ENCODE measurements at regions of chr7 and their contacts with region 1.

Region 1: DNA sequence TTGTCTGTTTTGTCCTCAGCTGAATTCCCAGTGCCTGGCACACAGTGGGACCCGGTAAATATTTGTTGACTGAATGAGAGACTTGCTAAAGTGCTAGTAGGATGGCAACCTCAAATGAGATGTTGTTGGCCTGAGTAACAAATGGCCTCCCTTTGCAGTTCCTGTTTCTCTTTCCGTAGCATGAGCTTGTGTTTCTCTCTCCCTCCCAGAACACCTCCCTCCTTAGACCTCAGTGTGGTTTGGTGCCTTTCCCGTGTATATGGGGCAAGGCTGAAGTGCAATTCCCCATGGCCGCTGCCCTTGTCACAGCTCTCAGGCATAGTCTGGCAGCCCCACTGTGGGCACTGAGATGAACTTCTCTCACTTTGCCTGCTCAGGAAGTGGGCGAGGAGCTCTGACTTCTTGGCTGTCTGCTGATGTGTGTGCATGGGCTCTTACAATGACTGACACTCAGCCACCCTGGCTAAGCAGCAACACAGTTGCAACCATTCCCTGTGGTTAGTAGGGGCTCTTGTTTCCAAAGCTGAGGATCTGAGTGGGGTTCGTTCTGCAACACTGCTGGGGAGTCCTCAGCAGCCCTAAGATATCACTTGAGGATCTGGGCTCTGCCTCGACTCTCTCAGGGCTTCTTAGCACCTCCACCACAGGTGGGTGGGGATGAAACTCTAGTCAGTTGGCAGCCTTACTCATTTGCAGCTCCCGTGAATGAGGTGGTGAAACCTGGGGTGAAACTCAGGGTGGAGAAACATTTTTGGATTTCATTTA is 136.1 kb downstream of the ICA1 start:
- DNase-seq: peak; percentile 91
- H3K4me3 Mint-ChIP-seq: peak overlapping the region; percentile 76
- H3K27ac Mint-ChIP-seq: peak overlapping the region; percentile 98
- H3K4me1 Mint-ChIP-seq: peaks cover 67% of the 10 kb centered on the region
- H3K27me3 Mint-ChIP-seq: no peaks in the 10 kb centered on the region

Region 2: GRCh38 chr7:7653593-7654187 is 472.2 kb before region 1 on chr7:
- intact Hi-C with region 1: no loop called
- DNase-seq: peak; percentile 73
- H3K4me3 Mint-ChIP-seq: no peak overlapping the region
- H3K27ac Mint-ChIP-seq: no peak overlapping the region
- H3K4me1 Mint-ChIP-seq: peaks cover 11% of the 10 kb centered on the region
- H3K27me3 Mint-ChIP-seq: no peaks in the 10 kb centered on the region

Region 3: GRCh38 chr7:7772397-7772821 is 353.5 kb before region 1 on chr7:
- intact Hi-C with region 1: loop called (anchors 1 kb)
- DNase-seq: peak; percentile 65
- H3K4me3 Mint-ChIP-seq: peak overlapping the region; percentile 49
- H3K27ac Mint-ChIP-seq: peak overlapping the region; percentile 73
- H3K4me1 Mint-ChIP-seq: peaks cover 12% of the 10 kb centered on the region
- H3K27me3 Mint-ChIP-seq: peaks cover 2% of the 10 kb centered on the region

Region 4: DNA sequence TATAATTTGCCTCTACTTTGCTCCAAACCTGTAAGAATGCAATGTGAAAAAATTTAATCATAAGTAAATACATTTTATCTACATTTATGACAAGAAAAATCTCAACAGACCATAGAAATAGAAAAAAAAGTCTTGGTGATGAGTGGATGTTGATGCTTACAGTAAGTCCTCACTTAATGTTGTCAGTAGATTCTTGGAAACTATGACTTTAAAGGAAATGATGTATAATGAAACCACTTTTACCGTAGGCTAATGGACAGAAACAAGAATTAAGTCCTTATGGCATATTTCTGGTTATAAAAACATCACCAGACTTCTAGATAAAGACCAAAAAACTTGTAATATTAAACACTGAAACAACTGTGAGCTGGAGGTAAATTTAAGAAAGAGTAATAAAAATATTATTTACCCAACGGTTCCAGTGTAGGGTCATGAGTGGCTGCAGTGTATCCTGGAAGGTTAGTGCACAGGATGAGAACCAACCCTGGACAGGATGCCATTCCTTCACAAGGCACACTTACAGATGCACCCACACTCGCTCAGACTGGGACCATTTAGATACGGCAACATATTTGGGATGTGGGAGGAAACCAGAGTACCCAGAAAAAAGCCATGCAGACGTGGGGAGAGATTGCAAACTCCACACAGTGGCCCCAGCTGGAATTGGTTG is 81.0 kb before region 1 on chr7:
- intact Hi-C with region 1: loop called (anchors 1 kb)
- DNase-seq: no peak
- H3K4me3 Mint-ChIP-seq: peak overlapping the region; percentile 33
- H3K27ac Mint-ChIP-seq: peak overlapping the region; percentile 75
- H3K4me1 Mint-ChIP-seq: peaks cover 60% of the 10 kb centered on the region
- H3K27me3 Mint-ChIP-seq: no peaks in the 10 kb centered on the region

Region 5: GRCh38 chr7:8176370-8177081 is 50.7 kb after region 1 on chr7:
- intact Hi-C with region 1: loop called (anchors 1 kb)
- DNase-seq: peak; percentile 89
- H3K4me3 Mint-ChIP-seq: peak overlapping the region; percentile 78
- H3K27ac Mint-ChIP-seq: peak overlapping the region; percentile 93
- H3K4me1 Mint-ChIP-seq: peaks cover 40% of the 10 kb centered on the region
- H3K27me3 Mint-ChIP-seq: no peaks in the 10 kb centered on the region

Region 6: GRCh38 chr7:8379264-8379663 is 253.4 kb after region 1 on chr7:
- intact Hi-C with region 1: no loop called
- DNase-seq: no peak
- H3K4me3 Mint-ChIP-seq: no peak overlapping the region
- H3K27ac Mint-ChIP-seq: no peak overlapping the region
- H3K4me1 Mint-ChIP-seq: no peaks in the 10 kb centered on the region
- H3K27me3 Mint-ChIP-seq: peaks cover 3% of the 10 kb centered on the region